MCF 10A (cell line): ENCODE measurements at regions of chr6 and their contacts with region 1.

Region 1: GRCh38 chr6:144013486-144013909 is 5.4 kb upstream of the PLAGL1 start:
- DNase-seq: peak; percentile 90
- H3K4me3 Mint-ChIP-seq: no peak overlapping the region
- H3K27ac Mint-ChIP-seq: no peak overlapping the region
- H3K4me1 Mint-ChIP-seq: no peaks in the 10 kb centered on the region
- H3K27me3 Mint-ChIP-seq: peaks cover 13% of the 10 kb centered on the region
- CTCF ChIP-seq: peak; percentile 94

Region 2: GRCh38 chr6:143570147-143570853 is 443.2 kb before region 1 on chr6:
- CTCF ChIA-PET with region 1: interaction called, 110 read pairs
- POLR2A ChIA-PET with region 1: interaction called, 8 read pairs
- intact Hi-C with region 1: loop called (anchors 1 kb)
- DNase-seq: no peak
- H3K4me3 Mint-ChIP-seq: no peak overlapping the region
- H3K27ac Mint-ChIP-seq: no peak overlapping the region
- H3K4me1 Mint-ChIP-seq: no peaks in the 10 kb centered on the region
- H3K27me3 Mint-ChIP-seq: no peaks in the 10 kb centered on the region
- CTCF ChIP-seq: no peak

Region 3: DNA sequence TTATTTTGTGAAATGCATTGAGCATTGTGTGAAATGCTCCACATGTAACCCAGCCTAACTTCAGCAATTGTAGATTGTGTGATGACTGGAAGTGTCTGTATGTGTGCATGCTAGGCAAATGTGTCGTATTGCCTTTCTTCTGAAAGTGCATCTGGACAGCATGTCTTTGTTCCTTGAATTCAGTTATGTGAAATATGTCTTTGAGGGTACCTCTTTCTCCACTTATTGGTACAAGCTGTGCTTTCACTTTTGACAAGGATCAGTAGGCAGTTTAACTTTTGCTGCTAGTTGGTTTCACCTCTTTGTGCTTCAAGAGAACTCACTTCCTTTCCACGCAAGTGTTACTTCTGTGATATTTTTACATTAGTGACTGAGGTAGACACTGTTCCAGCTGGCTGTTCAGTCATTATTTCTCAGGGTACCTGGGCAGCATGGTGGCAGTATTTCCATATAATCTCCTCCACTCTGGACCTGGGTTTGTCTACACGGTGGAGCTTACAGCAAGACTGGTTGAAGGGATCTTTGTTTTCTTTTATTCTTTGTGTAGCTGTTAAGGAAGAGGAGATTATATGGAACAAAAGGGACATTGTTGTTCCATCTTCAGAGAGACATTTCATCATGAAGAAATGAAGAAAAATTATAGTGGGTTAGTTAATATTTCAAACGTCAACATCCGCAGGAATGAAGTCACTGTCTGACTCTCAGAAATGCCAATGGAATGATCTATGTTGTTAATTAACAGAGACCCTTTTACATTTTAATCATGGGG is 447.0 kb after region 1 on chr6:
- CTCF ChIA-PET with region 1: no interaction called
- POLR2A ChIA-PET with region 1: no interaction called
- intact Hi-C with region 1: no loop called
- DNase-seq: no peak
- H3K4me3 Mint-ChIP-seq: no peak overlapping the region
- H3K27ac Mint-ChIP-seq: no peak overlapping the region
- H3K4me1 Mint-ChIP-seq: no peaks in the 10 kb centered on the region
- H3K27me3 Mint-ChIP-seq: no peaks in the 10 kb centered on the region
- CTCF ChIP-seq: no peak